ENCODE measurements at regions of chr5 and their contacts with region 1.

Region 1: DNA sequence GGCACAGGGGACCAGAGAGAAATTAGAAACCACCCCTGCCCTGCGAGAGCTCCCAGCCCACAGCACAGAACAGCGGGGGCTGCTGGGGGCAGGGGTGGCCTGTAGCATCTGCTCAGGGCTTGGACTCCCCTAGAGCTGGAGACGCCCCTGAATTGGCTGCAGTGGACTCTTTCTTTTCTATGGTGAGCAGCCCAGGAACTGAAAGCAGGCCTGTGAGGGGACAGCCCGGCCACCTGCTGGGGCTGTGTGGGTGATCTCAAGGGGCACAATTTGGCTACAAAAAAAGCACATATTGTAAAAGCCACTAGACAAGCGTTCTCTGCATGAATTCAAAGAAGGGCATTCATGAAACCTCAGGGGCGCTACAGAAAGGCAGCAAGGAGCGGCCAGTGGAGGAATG is 57.5 kb upstream of the ICE1 start:
- DNase-seq: no peak
- H3K4me3 ChIP-seq: no peak overlapping the region
- H3K27ac ChIP-seq: no peak overlapping the region
- H3K4me1 ChIP-seq: no peaks in the 10 kb centered on the region
- H3K27me3 ChIP-seq: no peaks in the 10 kb centered on the region
- CTCF ChIP-seq: no peak
- POLR2A ChIP-seq: no peak

Region 2: DNA sequence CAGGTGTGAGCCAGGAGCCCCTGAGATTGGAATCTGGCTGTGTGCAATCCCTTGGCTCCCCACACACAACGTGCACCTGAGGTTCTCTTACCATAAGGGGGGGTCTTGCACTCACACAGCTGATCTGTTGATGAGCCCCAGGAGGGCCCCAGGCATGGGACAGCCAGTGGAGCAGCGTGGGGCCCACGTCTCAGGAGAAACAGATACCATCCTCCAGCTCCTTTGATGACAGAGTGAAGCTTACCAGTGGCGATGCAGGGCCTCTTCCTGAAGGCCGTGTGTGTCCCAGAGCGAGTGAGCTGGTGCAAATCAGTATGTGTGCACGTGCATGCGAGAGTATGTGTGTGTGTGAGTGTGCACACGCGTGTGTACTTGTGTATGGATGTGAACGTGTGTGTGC is 1481.9 kb before region 1 on chr5:
- intact Hi-C with region 1: loop called (anchors 5 kb)
- DNase-seq: no peak
- H3K4me3 ChIP-seq: no peak overlapping the region
- H3K27ac ChIP-seq: no peak overlapping the region
- H3K4me1 ChIP-seq: no peaks in the 10 kb centered on the region
- H3K27me3 ChIP-seq: no peaks in the 10 kb centered on the region
- CTCF ChIP-seq: no peak
- POLR2A ChIP-seq: no peak

Region 3: DNA sequence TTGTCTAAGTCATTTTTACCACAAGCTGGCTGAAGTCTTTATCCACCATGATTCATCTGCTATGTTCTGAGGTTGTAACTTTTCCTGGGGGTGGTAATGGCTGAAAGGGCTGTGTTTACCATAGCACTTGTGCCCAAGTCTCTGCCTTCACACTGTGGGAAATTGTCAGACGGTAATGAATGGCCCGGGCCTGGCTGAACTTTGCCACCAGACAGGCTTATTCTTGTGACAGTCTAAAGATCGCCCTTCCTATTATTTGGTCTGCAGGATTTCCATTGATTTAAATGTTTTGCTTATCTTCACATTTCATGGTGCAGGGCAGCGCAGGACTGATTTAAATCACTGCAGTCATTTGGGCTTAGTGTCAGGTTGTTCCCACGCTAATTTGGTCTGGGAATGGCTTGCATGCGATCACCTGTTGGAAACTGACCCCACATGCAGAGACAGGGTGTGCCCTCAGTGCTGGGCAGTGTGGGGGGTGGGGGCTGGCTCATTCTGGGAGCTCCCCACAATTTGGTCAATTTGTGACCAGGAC is 51.8 kb before region 1 on chr5:
- intact Hi-C with region 1: loop called (anchors 1 kb)
- DNase-seq: no peak
- H3K4me3 ChIP-seq: no peak overlapping the region
- H3K27ac ChIP-seq: no peak overlapping the region
- H3K4me1 ChIP-seq: no peaks in the 10 kb centered on the region
- H3K27me3 ChIP-seq: no peaks in the 10 kb centered on the region
- CTCF ChIP-seq: no peak
- POLR2A ChIP-seq: no peak

Measured in breast epithelium (tissue), 4 donors.